Heart right ventricle (tissue), 16 donors: ENCODE measurements at regions of chr10 and their contacts with region 1.

Region 1: DNA sequence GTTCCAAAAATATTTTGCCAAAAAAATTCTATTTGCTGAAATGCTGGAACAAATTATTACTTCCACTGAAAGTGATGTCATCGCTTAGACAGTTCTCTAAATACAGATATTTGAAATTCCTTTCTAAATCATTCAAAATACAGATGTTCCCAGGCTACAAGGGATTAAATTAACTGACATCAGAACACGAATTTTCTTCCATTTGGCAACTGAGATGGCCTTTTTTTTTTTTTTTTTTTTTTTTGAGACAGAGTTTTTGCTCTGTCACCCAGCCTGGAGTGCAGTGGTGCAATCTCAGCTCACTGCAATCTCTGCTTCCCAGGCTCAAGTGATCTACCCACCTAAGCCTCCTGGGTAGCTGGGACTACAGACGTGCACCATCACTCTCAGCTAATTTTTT is 57.0 kb downstream of the P4HA1 start:
- DNase-seq: no peak
- ATAC-seq: peak; percentile 34 to 86 (median 78)
- H3K4me3 ChIP-seq: no peak overlapping the region
- H3K27ac ChIP-seq: peak overlapping the region in 4 of 10 donors; percentile 5 to 43 (median 36)
- H3K4me1 ChIP-seq: peaks cover 0 to 20% (median 1%) of the 10 kb centered on the region in 9 donors
- H3K27me3 ChIP-seq: no peaks in the 10 kb centered on the region
- CTCF ChIP-seq: no peak

Region 2: GRCh38 chr10:73096449-73097304 is 57.0 kb after region 1 on chr10 and contains the start of gene P4HA1:
- intact Hi-C with region 1: no loop called
- DNase-seq: peak; percentile 99 to 100
- ATAC-seq: peak; percentile 97 to 98 (median 98)
- H3K4me3 ChIP-seq: peak within 1 kb of the TSS; percentile 76 to 92 (median 85)
- H3K27ac ChIP-seq: peak within 1 kb of the TSS; percentile 94 to 99 (median 96)
- H3K4me1 ChIP-seq: peaks cover 0 to 51% (median 38%) of the 10 kb centered on the region in 9 donors
- H3K27me3 ChIP-seq: no peaks in the 10 kb centered on the region
- CTCF ChIP-seq: peak; percentile 33 to 92 (median 69)
- total RNA-seq, gene P4HA1: 44.4 to 67.3 (median 51.5) TPM

Region 3: DNA sequence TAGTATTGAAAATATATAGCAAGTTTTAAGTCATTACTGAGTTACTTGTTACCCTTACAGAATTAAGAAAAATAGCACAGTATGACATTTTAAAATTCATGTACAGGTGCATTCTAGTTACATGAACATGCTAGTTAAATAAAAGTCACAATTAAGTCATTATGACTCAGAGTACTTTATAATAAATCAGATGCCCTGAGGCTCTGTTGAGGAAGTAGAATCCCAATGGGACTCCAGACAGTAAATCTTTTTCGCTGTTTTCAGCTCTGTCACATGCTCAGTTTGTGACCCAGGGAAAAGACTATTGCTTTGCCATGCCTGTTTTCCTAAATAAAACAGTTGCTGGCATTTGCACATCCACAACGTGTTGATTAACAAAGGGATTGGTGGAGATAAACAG is 91.7 kb after region 1 on chr10:
- intact Hi-C with region 1: loop called in 1 of 10 experiments (anchors 10 kb)
- DNase-seq: no peak
- ATAC-seq: no peak
- H3K4me3 ChIP-seq: no peak overlapping the region
- H3K27ac ChIP-seq: no peak overlapping the region
- H3K4me1 ChIP-seq: peaks cover 0 to 15% (median 0%) of the 10 kb centered on the region in 9 donors
- H3K27me3 ChIP-seq: no peaks in the 10 kb centered on the region
- CTCF ChIP-seq: no peak